Activated CD4-positive, alpha-beta memory T cell treated with anti-CD3 and anti-CD28 coated beads for 36 hours (primary cell): ENCODE measurements at regions of chr12 and their contacts with region 1.

Region 1: GRCh38 chr12:96516472-96517430 is 27.4 kb downstream of the CFAP54 start:
- DNase-seq: peak; percentile 92
- H3K4me3 Mint-ChIP-seq: no peak overlapping the region
- H3K27ac Mint-ChIP-seq: peak overlapping the region; percentile 44
- H3K4me1 Mint-ChIP-seq: peaks cover 15% of the 10 kb centered on the region
- H3K27me3 Mint-ChIP-seq: no peaks in the 10 kb centered on the region

Region 2: GRCh38 chr12:95918194-95918993 is 598.4 kb before region 1 on chr12:
- CTCF ChIA-PET with region 1: interaction called, 17 read pairs
- POLR2A ChIA-PET with region 1: no interaction called
- intact Hi-C with region 1: loop called (anchors 2 kb)
- DNase-seq: peak; percentile 58
- H3K4me3 Mint-ChIP-seq: no peak overlapping the region
- H3K27ac Mint-ChIP-seq: no peak overlapping the region
- H3K4me1 Mint-ChIP-seq: no peaks in the 10 kb centered on the region
- H3K27me3 Mint-ChIP-seq: peaks cover 2% of the 10 kb centered on the region

Region 3: DNA sequence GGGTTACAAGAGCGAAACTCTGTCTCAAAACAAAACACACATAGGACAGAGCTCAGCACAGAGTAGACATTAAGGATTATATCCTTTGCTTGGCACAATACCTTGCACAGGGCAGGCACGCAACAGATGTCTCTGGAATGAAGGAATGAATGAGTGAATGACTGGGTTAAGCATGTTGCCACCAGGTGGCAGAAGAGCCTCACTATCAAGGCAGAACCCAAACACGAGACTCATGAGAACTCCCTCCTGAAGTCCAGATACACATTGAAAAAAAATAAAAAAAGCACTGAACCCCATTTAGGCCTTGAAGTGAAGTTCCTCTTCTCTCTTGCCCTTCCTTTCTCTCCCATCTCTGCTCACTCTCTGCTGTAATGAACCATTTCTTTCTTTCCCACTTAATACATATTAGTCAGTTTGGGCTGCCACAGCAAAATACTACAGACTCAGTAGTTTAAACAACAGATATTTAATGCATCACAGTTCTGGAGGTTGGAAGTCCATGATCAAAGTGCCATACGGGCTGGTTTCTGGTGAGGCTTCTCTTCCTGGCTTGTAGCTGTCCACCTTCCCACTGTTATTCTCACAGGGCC is 454.8 kb before region 1 on chr12:
- CTCF ChIA-PET with region 1: interaction called, 26 read pairs
- POLR2A ChIA-PET with region 1: no interaction called
- intact Hi-C with region 1: loop called (anchors 1 kb)
- DNase-seq: peak; percentile 83
- H3K4me3 Mint-ChIP-seq: no peak overlapping the region
- H3K27ac Mint-ChIP-seq: no peak overlapping the region
- H3K4me1 Mint-ChIP-seq: peaks cover 26% of the 10 kb centered on the region
- H3K27me3 Mint-ChIP-seq: no peaks in the 10 kb centered on the region

Region 4: GRCh38 chr12:96219698-96220206 is 297.0 kb before region 1 on chr12:
- CTCF ChIA-PET with region 1: interaction called, 42 read pairs
- POLR2A ChIA-PET with region 1: no interaction called
- intact Hi-C with region 1: loop called (anchors 1 kb)
- DNase-seq: peak; percentile 36
- H3K4me3 Mint-ChIP-seq: no peak overlapping the region
- H3K27ac Mint-ChIP-seq: peak overlapping the region; percentile 14
- H3K4me1 Mint-ChIP-seq: peaks cover 53% of the 10 kb centered on the region
- H3K27me3 Mint-ChIP-seq: no peaks in the 10 kb centered on the region

Region 5: GRCh38 chr12:96489103-96490056 is 27.4 kb before region 1 on chr12 and contains the start of gene CFAP54:
- CTCF ChIA-PET with region 1: interaction called, 52 read pairs
- POLR2A ChIA-PET with region 1: interaction called, 3 read pairs
- intact Hi-C with region 1: loop called (anchors 1 kb)
- DNase-seq: peak; percentile 96
- H3K4me3 Mint-ChIP-seq: peak within 1 kb of the TSS; percentile 83
- H3K27ac Mint-ChIP-seq: peak within 1 kb of the TSS; percentile 16
- H3K4me1 Mint-ChIP-seq: peaks cover 36% of the 10 kb centered on the region
- H3K27me3 Mint-ChIP-seq: no peaks in the 10 kb centered on the region
- total RNA-seq, gene CFAP54: 0.31 to 0.33 TPM

Region 6: DNA sequence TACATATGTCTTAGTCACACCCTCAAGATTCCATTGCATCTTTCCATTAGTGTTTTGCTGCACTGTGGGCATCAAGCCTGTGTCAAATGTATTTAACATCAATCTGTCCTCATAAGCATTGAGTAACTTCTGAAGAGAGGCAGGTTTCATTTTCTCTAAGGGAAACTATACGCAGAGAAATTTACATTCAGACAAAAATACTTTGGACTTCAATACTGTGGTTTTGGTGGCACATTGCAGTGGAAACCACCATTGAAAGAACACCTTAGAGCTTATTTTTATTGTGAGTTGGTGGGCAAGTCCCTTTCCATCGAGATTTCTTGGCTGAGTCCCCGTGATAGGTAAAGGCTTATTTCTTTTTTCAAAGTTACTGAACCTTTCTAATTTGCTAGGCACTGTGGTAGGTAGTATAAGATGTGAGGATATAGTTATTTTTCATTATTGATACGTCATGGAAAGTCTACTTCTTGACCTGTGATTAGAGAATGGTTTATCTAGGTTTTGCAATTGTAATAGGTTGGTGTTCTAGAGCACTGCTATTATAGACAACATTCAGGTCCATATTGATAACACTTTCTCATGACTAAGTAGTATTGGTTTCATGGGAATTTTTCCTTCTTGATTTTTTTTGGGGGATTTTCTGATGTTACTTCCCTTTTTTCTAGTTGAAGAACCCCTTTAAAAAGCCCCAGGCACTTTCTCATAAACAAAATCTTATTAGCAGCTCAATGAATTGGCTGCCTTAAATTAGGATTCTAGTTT is 54.5 kb after region 1 on chr12:
- CTCF ChIA-PET with region 1: no interaction called
- POLR2A ChIA-PET with region 1: interaction called, 3 read pairs
- intact Hi-C with region 1: loop called (anchors 1 kb)
- DNase-seq: peak; percentile 33
- H3K4me3 Mint-ChIP-seq: peak overlapping the region; percentile 40
- H3K27ac Mint-ChIP-seq: peak overlapping the region; percentile 65
- H3K4me1 Mint-ChIP-seq: peaks cover 26% of the 10 kb centered on the region
- H3K27me3 Mint-ChIP-seq: peaks cover 4% of the 10 kb centered on the region